ENCODE measurements at regions of chr19 and their contacts with region 1.

Region 1: DNA sequence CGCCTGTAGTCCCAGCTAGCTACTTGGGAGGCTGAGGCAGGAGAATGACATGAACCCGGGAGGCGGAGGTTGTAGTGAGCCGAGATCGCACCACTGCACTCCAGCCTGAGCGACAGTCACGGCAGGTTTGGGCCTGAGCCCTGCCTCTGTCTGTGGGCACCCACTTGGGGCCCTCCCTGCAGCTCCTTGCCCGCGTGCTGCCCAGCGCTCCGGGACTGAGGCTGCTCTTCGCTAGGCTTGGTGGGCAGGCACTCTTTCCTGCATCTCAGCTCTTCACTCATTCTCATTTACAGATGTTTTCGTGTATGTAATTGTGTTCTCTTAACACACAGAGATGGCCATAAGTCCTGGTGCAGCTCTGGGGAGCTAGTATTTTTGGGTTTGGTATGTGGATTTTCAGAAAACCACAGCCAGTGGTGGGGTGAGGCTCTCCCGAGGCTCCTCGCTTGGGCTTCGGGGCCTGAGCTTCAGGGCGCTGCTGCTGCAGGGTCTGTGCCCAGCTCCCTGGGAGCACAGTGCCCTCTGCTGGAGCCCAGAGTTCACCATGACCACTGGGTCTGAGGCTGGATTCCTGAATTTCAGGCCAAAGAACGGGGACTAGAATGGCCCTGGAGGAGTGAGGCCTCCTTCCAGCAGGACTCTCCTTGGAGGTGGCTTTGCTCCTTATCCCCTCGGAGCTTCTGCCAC is 15.2 kb downstream of the UPF1 start:
- DNase-seq: peak; percentile 92
- H3K4me3 ChIP-seq: 0 out of 2 replicates have a peak overlapping the region, but pooled peaks have one; percentile 13
- H3K27ac ChIP-seq: peak overlapping the region; percentile 90
- H3K4me1 ChIP-seq: peaks cover 44% of the 10 kb centered on the region
- H3K27me3 ChIP-seq: no peaks in the 10 kb centered on the region

Region 2: DNA sequence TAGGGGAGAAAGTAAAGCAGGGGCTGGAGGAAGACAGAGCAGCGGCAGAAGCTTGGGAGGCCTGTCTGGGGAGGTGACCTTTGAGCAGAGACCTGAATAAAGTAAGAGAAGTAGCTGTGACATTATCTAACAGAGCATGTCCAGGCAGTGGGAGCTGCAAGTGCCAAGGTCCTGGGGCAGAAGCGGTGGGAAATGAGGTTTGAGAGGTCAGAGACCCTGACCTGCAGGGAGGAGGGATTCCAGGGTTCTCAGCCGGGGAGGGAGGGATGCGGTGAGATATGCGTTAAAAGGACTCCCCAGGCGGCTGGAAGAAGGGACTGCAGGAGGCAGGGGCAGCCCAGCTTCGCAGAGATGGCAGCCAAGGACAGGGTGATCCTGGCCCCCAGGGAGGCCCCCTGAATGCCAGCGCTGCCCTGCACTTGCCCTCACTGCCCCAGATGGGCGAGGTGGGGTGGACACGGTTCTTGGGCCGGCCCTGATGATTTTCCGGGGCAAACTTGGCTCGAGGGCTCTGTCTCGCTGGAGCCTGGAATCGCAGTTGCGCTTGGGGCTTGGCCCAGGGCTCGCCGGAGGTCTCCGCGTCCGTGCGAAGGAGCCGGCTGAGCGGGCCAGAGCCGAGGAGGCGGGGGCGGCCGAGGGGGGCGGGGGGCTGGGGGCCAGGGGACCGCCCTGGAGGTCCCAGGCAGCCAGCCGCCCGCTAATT is 243.6 kb before region 1 on chr19:
- in situ Hi-C with region 1: loop called (anchors 10 kb)
- DNase-seq: peak; percentile 66
- H3K4me3 ChIP-seq: no peak overlapping the region
- H3K27ac ChIP-seq: no peak overlapping the region
- H3K4me1 ChIP-seq: no peaks in the 10 kb centered on the region
- H3K27me3 ChIP-seq: peaks cover 29% of the 10 kb centered on the region

Region 3: GRCh38 chr19:19120308-19121231 is 273.6 kb after region 1 on chr19:
- in situ Hi-C with region 1: no loop called
- DNase-seq: peak; percentile 10
- H3K4me3 ChIP-seq: no peak overlapping the region
- H3K27ac ChIP-seq: no peak overlapping the region
- H3K4me1 ChIP-seq: no peaks in the 10 kb centered on the region
- H3K27me3 ChIP-seq: no peaks in the 10 kb centered on the region

Region 4: DNA sequence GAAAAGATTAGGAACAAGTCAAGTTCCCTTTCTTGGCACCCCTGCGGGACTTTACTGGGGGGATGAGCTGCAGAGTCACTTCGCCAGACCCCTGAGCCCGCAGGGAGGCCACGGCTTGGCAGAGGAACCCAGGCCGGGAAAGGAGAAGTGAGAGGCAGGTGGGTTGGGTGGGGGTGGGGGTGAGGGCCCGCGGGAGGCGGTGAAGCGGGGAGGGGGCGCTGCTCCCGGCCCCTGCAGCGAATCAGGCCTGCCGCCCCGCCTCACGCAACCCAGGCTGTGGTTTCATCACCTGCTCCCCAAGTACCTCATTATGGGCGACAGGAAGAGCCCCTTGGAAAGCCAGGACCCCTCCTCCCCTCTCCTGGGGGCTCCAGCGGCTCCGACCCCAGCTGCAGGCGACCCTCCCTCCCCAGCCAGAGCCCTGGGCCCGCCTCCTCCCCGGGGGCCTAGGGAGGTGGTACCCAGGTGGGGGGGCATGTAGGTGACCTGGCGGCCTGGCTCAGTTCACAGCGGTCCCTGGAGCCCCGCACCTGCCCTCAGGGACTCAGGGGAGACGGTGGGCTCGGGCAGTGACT is 313.5 kb after region 1 on chr19:
- in situ Hi-C with region 1: no loop called
- DNase-seq: no peak
- H3K4me3 ChIP-seq: no peak overlapping the region
- H3K27ac ChIP-seq: no peak overlapping the region
- H3K4me1 ChIP-seq: no peaks in the 10 kb centered on the region
- H3K27me3 ChIP-seq: no peaks in the 10 kb centered on the region